ENCODE measurements at regions of chr6 and their contacts with region 1.

Region 1: GRCh38 chr6:42211726-42212125 is 5.9 kb downstream of the MRPS10 start:
- DNase-seq: no peak
- ATAC-seq: no peak
- H3K4me3 ChIP-seq: no peak overlapping the region
- H3K27ac ChIP-seq: no peak overlapping the region
- H3K4me1 ChIP-seq: peaks cover 6 to 14% of the 10 kb centered on the region in 2 experiments; a peak in 4 of 5 replicates
- H3K27me3 ChIP-seq: no peaks in the 10 kb centered on the region
- CTCF ChIP-seq: no peak
- EP300 ChIP-seq: no peak
- POLR2A ChIP-seq: no peak
- RAD21 ChIP-seq: no peak

Region 2: DNA sequence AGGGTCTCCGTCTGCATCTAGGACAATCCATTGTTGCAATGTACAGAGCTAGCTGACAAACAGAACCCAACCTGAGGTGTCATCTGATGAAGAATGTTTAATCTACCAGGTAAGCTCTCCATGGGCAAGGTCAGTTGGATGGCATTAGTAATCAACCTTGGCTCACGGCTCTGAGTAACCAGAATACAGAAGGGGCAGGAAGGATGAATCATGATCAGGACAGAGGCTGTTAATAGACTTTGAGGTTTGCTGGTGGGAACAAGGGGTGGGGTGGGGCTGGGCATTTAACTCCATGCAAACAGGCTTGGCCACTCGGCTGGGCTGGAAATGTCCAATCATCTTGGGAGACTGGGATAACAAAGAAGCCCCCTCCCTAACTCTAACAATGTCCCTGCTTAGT is 83.0 kb after region 1 on chr6:
- CTCF ChIA-PET with region 1: no interaction called
- POLR2A ChIA-PET with region 1: no interaction called
- in situ Hi-C with region 1: no loop called
- intact Hi-C with region 1: loop called (anchors 2 kb)
- DNase-seq: no peak
- ATAC-seq: no peak
- H3K4me3 ChIP-seq: no peak overlapping the region
- H3K27ac ChIP-seq: no peak overlapping the region
- H3K4me1 ChIP-seq: no peaks in the 10 kb centered on the region
- H3K27me3 ChIP-seq: peaks cover 35 to 44% of the 10 kb centered on the region in 2 experiments
- CTCF ChIP-seq: no peak
- EP300 ChIP-seq: no peak
- POLR2A ChIP-seq: no peak
- RAD21 ChIP-seq: no peak

Region 3: DNA sequence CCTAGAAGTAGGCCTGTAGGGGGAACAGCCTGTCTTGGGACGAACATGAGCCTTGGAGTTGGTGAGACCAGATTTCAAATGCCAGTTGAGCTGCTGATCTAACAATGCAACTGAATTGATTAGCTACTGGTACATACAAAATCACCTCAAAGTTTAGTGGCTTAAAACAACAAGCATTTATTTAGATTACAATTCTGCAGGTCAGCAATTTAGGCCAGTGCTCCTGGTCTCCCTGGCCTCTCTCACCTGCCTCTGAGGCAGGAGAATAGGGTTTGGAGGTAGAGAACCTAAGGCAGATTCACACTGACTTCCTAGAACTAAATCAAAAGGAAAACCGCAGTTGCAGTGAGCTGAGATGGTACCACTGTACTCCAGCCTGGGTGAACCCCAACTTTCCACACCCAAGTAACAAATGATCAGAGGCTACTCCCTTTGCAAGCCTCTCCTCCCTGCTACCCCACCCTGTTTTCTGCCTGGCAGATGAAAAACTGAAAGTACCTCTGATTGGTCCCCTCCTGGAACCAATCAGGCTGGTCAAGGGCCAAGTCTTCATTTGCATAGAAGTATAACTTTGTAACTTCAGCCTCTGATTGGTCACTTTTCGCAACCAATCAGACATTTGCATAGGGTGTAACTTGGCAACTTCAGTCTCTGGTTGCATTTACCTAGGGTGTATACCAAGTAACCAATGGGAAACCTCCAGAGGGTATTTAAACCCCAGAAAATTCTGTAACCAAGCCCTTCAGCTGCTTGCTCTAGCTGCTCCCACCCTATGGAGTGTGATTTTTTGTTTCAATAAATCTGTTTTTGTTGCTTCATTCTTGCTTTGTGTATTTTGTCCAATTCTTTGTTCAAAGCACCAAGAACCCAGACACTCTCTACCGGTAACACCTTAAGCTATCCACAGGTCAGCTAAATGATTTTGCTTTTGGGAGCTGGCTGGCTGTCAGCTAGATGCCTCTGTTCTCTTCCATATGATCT is 344.0 kb after region 1 on chr6:
- CTCF ChIA-PET with region 1: no interaction called
- POLR2A ChIA-PET with region 1: no interaction called
- in situ Hi-C with region 1: no loop called
- intact Hi-C with region 1: no loop called
- DNase-seq: peak in 2 of 4 experiments; percentile 54 to 65
- ATAC-seq: peak; percentile 96
- H3K4me3 ChIP-seq: no peak overlapping the region
- H3K27ac ChIP-seq: no peak overlapping the region
- H3K4me1 ChIP-seq: peaks cover 4 to 5% of the 10 kb centered on the region in 2 experiments; a peak in 3 of 5 replicates
- H3K27me3 ChIP-seq: no peaks in the 10 kb centered on the region
- CTCF ChIP-seq: no peak
- EP300 ChIP-seq: no peak
- POLR2A ChIP-seq: no peak
- RAD21 ChIP-seq: no peak

Measured in K562 (cell line).